ENCODE measurements at regions of chr14 and their contacts with region 1.

Region 1: DNA sequence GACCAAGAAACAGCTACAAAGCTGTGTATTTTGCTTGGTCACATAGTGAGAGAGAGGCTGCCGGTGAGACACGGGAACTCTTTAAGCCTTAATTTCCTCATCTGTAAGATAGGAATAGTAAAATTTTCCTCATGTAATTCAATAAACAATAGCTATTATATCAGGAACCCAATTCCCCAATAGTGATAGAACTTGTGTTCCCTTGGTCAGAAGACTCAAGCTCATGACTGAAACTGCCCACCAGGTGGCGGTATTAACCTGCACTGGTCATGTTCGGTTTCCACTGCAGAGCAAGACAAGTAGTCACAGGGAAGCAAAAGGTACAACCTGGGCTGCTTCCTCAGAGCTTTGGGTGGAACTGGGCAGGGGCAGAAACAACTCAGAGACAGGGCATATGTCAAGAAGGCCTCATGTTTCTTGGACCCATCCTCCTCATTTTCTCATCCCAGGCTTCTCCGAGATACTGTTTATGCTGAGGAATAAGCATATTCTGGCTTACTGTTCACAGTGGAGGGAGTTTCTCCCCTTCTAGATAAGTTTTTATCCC is 4.2 kb upstream of the AJUBA start:
- DNase-seq: peak; percentile 88
- ATAC-seq: peak; percentile 63
- H3K4me3 ChIP-seq: no peak overlapping the region
- H3K4me3 Mint-ChIP-seq: no peak overlapping the region
- H3K27ac ChIP-seq: no peak overlapping the region
- H3K27ac Mint-ChIP-seq: no peak overlapping the region
- H3K4me1 ChIP-seq: peaks cover 13 to 18% of the 10 kb centered on the region in 2 donors
- H3K4me1 Mint-ChIP-seq: no peaks in the 10 kb centered on the region
- H3K27me3 ChIP-seq: peaks cover 0 to 11% (median 4%) of the 10 kb centered on the region in 4 experiments
- H3K27me3 Mint-ChIP-seq: no peaks in the 10 kb centered on the region
- CTCF ChIP-seq: peak; percentile 89

Region 2: DNA sequence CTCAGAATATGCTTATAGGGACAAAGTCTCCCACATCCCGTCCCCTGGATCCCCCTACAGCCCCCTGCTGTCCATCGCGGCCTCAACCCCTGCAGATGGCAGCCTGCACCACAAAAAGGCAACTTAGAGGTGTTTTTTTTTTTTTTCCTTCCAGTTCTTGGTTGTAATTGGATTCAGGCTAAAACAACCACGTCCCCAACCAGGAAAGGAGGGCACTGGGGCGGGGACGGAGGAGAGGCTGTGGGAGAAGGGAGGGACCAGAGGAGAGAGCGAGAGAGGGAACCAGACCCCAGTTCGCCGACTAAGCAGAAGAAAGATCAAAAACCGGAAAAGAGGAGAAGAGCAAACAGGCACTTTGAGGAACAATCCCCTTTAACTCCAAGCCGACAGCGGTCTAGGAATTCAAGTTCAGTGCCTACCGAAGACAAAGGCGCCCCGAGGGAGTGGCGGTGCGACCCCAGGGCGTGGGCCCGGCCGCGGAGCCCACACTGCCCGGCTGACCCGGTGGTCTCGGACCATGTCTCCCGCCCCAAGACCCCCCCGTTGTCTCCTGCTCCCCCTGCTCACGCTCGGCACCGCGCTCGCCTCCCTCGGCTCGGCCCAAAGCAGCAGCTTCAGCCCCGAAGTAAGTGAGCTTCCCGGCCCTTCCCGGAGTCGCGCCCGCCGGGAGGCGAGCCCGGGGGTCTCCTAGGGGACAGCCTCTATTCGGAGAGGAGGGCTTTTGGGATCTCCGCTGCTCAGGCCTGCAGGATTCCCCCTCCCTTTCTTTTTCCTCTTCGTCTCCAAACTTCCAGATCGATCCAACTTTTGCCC is 150.1 kb before region 1 on chr14 and contains the start of gene MMP14:
- CTCF ChIA-PET with region 1: no interaction called
- POLR2A ChIA-PET with region 1: no interaction called
- intact Hi-C with region 1: no loop called
- DNase-seq: no peak
- ATAC-seq: peak; percentile 36
- H3K4me3 ChIP-seq: peak within 1 kb of the TSS; percentile 30 to 66 (median 62)
- H3K4me3 Mint-ChIP-seq: peak within 1 kb of the TSS; percentile 96
- H3K27ac ChIP-seq: no peak within 1 kb of the TSS
- H3K27ac Mint-ChIP-seq: peak within 1 kb of the TSS; percentile 94
- H3K4me1 ChIP-seq: peaks cover 18 to 22% of the 10 kb centered on the region in 2 donors
- H3K4me1 Mint-ChIP-seq: peaks cover 23% of the 10 kb centered on the region
- H3K27me3 ChIP-seq: peaks cover 0 to 29% (median 11%) of the 10 kb centered on the region in 4 experiments
- H3K27me3 Mint-ChIP-seq: peaks cover 4% of the 10 kb centered on the region
- CTCF ChIP-seq: no peak
- total RNA-seq, gene MMP14: 3.5 and 5.2 TPM in 2 replicates

Region 3: DNA sequence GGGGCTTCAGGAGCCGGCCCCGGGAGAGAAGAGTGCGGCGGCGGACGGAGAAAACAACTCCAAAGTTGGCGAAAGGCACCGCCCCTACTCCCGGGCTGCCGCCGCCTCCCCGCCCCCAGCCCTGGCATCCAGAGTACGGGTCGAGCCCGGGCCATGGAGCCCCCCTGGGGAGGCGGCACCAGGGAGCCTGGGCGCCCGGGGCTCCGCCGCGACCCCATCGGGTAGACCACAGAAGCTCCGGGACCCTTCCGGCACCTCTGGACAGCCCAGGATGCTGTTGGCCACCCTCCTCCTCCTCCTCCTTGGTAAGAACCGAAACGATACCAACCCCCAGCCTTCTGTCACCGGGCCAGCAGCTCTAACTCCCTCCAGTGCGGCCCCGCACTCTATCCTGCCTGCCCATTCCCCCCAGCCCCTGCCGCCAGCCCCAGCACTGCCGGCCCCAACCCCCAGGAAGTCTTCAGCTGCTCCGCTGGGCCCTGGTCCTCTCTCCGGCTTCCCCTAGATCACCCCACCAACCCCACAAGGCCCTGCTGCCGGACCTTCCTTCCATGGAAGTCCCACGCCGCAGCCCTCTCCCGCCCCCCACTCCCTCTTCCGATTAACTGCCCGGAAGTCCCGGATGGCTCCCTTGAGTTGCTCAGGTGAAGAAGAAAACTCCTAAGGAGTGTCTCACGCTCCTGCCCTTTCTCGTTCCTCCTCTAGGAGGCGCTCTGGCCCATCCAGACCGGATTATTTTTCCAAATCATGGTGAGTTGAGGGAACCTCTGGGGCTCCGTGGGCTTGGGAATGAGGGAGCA is 114.3 kb before region 1 on chr14:
- CTCF ChIA-PET with region 1: interaction called, 7 read pairs
- POLR2A ChIA-PET with region 1: interaction called, 3 read pairs
- intact Hi-C with region 1: loop called (anchors 5 kb)
- DNase-seq: peak; percentile 83
- ATAC-seq: peak; percentile 22
- H3K4me3 ChIP-seq: peak overlapping the region; percentile 79 to 97 (median 92)
- H3K4me3 Mint-ChIP-seq: peak overlapping the region; percentile 96
- H3K27ac ChIP-seq: peak overlapping the region; percentile 84 to 88
- H3K27ac Mint-ChIP-seq: peak overlapping the region; percentile 98
- H3K4me1 ChIP-seq: peaks cover 19 to 35% of the 10 kb centered on the region in 2 donors
- H3K4me1 Mint-ChIP-seq: peaks cover 34% of the 10 kb centered on the region
- H3K27me3 ChIP-seq: no peaks in the 10 kb centered on the region
- H3K27me3 Mint-ChIP-seq: no peaks in the 10 kb centered on the region
- CTCF ChIP-seq: peak; percentile 90

Region 4: GRCh38 chr14:22955702-22956569 is 30.6 kb before region 1 on chr14:
- CTCF ChIA-PET with region 1: interaction called, 23 read pairs
- POLR2A ChIA-PET with region 1: interaction called, 3 read pairs
- intact Hi-C with region 1: loop called (anchors 2 kb)
- DNase-seq: no peak
- ATAC-seq: no peak
- H3K4me3 ChIP-seq: peak overlapping the region; percentile 58 to 97 (median 84)
- H3K4me3 Mint-ChIP-seq: peak overlapping the region; percentile 93
- H3K27ac ChIP-seq: peak overlapping the region; percentile 76
- H3K27ac Mint-ChIP-seq: peak overlapping the region; percentile 89
- H3K4me1 ChIP-seq: peaks cover 11 to 16% of the 10 kb centered on the region in 2 donors
- H3K4me1 Mint-ChIP-seq: peaks cover 21% of the 10 kb centered on the region
- H3K27me3 ChIP-seq: no peaks in the 10 kb centered on the region
- H3K27me3 Mint-ChIP-seq: no peaks in the 10 kb centered on the region
- CTCF ChIP-seq: no peak

Region 5: DNA sequence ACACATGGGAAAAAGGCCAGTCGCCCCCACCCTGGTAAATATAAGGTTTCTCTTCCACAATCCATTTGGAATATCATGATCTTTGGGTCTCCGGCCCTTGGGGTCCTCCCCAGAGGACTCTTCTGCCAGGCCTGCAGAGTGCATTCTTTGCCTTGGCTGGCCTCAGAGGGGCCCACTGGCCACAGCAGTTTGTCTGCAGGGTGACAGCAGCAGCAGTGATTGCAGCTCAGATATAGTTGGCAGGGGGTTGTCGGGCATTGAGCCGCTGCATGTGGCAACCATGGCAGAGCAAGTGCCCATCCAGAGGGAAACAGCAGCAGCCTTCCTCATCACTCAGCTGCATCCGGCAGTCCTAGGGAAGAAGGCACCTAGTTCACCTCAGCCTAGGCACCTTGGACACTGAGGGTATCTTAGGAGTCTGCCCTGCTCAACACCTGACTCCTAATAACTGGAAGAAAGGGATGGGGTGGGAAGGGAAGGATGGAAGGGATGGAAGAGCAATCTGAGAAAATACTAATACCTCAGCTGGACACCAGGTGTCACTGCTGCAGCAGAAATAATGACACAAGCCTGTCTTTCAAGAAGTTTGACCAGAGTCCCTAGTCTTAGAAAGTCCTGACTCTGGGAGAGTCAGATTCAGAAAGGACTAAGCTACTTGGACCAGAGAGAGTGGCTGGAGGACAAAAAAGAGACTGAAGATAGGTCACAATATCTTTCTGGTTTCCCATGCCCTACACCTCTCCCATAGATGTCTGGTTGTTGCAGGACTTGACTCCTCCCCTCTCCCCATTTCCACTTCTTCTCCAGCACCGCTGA is 13.2 kb before region 1 on chr14:
- CTCF ChIA-PET with region 1: interaction called, 264 read pairs
- POLR2A ChIA-PET with region 1: interaction called, 6 read pairs
- intact Hi-C with region 1: loop called (anchors 1 kb)
- DNase-seq: peak; percentile 69
- ATAC-seq: peak; percentile 54
- H3K4me3 ChIP-seq: no peak overlapping the region
- H3K4me3 Mint-ChIP-seq: no peak overlapping the region
- H3K27ac ChIP-seq: no peak overlapping the region
- H3K27ac Mint-ChIP-seq: no peak overlapping the region
- H3K4me1 ChIP-seq: peaks cover 0 to 5% of the 10 kb centered on the region in 2 donors
- H3K4me1 Mint-ChIP-seq: peaks cover 4% of the 10 kb centered on the region
- H3K27me3 ChIP-seq: peaks cover 0 to 5% (median 2%) of the 10 kb centered on the region in 4 experiments
- H3K27me3 Mint-ChIP-seq: peaks cover 15% of the 10 kb centered on the region
- CTCF ChIP-seq: peak; percentile 79

Region 6: GRCh38 chr14:23006544-23007419 is 20.2 kb after region 1 on chr14:
- CTCF ChIA-PET with region 1: interaction called, 89 read pairs
- POLR2A ChIA-PET with region 1: interaction called, 3 read pairs
- intact Hi-C with region 1: loop called (anchors 2 kb)
- DNase-seq: peak; percentile 98
- ATAC-seq: peak; percentile 91
- H3K4me3 ChIP-seq: peak overlapping the region; percentile 70 to 95 (median 85)
- H3K4me3 Mint-ChIP-seq: peak overlapping the region; percentile 99
- H3K27ac ChIP-seq: peak overlapping the region; percentile 75 to 88
- H3K27ac Mint-ChIP-seq: peak overlapping the region; percentile 98
- H3K4me1 ChIP-seq: peaks cover 24 to 32% of the 10 kb centered on the region in 2 donors
- H3K4me1 Mint-ChIP-seq: peaks cover 42% of the 10 kb centered on the region
- H3K27me3 ChIP-seq: no peaks in the 10 kb centered on the region
- H3K27me3 Mint-ChIP-seq: no peaks in the 10 kb centered on the region
- CTCF ChIP-seq: no peak

Region 7: DNA sequence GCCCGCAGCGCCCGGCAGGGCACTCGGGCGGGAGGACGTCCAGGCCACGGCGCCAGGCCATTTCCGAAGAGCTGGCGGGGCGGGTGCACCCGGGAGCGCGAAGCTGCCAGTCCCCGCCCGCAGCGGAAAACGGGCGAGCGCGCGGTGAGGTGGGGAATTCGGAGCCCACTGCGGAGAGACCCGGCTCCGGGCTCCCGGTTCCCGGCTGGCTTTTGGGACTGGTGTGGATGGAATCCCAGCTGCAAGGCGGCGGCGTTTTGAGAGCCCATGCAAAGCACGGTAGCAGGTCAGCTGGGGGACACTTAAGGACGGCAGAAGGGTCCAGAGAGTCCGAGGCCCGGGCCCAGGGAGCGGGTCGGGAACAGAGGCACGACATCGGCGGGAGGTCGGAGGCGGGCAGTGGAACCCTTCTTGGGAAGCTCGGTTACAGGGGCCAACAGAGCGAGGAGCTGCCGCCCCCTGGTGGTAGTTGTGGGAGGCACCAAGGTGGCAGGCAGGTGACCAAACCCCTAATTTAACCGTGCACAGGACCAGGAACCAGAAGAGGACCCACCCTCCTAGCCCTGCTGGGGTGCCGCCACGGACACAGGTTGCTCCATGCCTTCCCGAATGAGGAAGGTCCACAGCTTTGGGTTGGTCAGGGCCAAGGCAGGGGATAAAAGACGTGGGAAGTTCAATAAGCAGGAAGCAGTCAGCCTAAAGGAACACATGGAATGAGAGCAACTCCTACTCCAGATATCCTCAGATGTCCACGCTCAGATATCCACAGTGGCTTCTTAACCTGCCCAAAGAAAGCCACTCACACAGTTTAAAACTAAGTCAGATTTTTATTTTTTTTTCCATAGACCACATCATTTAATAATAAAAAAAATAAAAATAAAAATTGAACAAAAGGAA is 71.4 kb after region 1 on chr14:
- CTCF ChIA-PET with region 1: interaction called, 1,134 read pairs
- POLR2A ChIA-PET with region 1: interaction called, 13 read pairs
- intact Hi-C with region 1: loop called (anchors 1 kb)
- DNase-seq: peak; percentile 89
- ATAC-seq: peak; percentile 64
- H3K4me3 ChIP-seq: peak overlapping the region; percentile 11 to 91 (median 68)
- H3K4me3 Mint-ChIP-seq: peak overlapping the region; percentile 95
- H3K27ac ChIP-seq: no peak overlapping the region
- H3K27ac Mint-ChIP-seq: peak overlapping the region; percentile 76
- H3K4me1 ChIP-seq: peaks cover 10 to 21% of the 10 kb centered on the region in 2 donors
- H3K4me1 Mint-ChIP-seq: peaks cover 18% of the 10 kb centered on the region
- H3K27me3 ChIP-seq: peaks cover 0 to 6% (median 0%) of the 10 kb centered on the region in 4 experiments
- H3K27me3 Mint-ChIP-seq: no peaks in the 10 kb centered on the region
- CTCF ChIP-seq: peak; percentile 95

Region 8: DNA sequence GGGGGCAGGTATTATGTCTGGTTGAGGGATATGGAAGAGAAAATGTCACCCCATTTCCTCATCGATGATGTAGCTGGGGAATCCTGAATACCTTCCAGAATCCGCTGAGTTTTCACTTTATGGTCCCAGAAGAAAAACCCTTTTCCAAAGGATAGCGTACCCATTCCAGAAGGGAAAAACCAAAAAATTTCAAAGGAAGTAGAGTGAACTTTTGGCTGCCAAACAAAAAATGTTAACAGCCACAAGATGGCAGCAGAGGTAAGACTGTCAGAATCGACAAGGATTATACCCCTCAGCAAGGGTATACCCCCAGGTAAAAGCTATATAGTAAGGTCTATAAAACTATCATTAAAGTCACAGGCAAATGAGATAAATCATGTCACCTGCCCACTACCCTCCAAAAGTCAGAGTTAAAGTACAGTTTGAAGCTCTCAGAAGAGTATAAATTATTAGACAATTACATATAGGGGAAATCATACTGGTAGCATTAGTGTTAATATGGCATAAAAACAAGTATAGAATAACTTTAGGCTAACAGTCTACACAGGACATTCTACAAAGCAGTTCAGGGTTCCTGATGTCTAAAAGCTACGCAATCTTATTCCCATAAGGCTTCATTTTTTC is 90.3 kb after region 1 on chr14:
- CTCF ChIA-PET with region 1: interaction called, 34 read pairs
- POLR2A ChIA-PET with region 1: no interaction called
- intact Hi-C with region 1: no loop called
- DNase-seq: peak; percentile 62
- ATAC-seq: peak; percentile 66
- H3K4me3 ChIP-seq: no peak overlapping the region
- H3K4me3 Mint-ChIP-seq: no peak overlapping the region
- H3K27ac ChIP-seq: no peak overlapping the region
- H3K27ac Mint-ChIP-seq: no peak overlapping the region
- H3K4me1 ChIP-seq: peaks cover 2 to 4% of the 10 kb centered on the region in 2 donors
- H3K4me1 Mint-ChIP-seq: peaks cover 9% of the 10 kb centered on the region
- H3K27me3 ChIP-seq: no peaks in the 10 kb centered on the region
- H3K27me3 Mint-ChIP-seq: no peaks in the 10 kb centered on the region
- CTCF ChIP-seq: peak; percentile 83